Cardiac septum (tissue), 1 donor: ENCODE measurements at regions of chr1 and their contacts with region 1.

Region 1: DNA sequence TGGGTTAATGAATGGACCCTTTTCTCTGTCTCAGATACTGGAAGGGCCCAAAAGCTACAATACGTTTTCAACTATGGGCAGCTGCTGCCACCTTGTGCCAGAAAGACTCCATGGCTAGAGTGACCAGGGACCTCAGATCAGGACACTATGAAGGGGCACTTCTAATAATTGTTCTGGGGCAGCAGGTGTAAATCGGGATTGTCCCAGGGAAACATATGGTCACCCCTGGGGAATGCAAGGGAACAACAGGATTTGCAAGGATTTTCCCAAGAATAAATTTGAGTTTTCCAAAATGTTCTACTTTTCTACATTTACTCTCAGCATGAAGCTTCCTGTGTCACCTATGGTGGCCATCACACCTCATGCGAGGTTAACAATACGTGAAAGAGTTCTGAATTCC is 12.0 kb upstream of the FCAMR start:
- DNase-seq: no peak

Region 2: DNA sequence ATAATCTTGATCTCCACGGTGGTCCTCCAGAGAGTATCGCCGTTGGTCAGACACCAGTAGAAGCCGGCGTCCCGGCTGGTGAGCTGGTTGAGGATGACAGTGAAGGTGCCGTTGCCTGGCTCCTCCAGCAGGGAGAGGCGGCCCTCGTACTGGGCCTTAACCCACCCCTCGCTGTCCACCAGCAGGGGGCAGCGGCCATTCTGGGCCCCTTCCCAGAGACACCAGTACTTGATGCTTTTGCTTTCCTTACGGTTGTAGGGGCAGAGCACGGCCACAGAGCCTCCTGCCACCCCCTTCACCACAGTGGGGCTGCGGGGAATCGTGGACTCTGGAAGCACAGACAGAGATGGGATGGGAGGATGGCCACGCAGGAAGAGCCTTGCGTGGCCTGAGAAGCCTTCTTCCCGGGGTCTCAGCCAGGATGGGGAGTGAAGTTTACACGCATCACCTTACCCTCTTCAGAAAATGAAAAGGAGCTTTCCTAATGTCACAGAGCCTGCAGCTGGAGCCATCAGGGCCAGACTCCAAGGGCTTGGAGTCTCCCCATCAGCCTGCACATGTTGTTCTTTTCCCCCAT is 46.6 kb before region 1 on chr1:
- intact Hi-C with region 1: loop called (anchors 2 kb)
- DNase-seq: no peak